ENCODE measurements at regions of chr4 and their contacts with region 1.

Region 1: DNA sequence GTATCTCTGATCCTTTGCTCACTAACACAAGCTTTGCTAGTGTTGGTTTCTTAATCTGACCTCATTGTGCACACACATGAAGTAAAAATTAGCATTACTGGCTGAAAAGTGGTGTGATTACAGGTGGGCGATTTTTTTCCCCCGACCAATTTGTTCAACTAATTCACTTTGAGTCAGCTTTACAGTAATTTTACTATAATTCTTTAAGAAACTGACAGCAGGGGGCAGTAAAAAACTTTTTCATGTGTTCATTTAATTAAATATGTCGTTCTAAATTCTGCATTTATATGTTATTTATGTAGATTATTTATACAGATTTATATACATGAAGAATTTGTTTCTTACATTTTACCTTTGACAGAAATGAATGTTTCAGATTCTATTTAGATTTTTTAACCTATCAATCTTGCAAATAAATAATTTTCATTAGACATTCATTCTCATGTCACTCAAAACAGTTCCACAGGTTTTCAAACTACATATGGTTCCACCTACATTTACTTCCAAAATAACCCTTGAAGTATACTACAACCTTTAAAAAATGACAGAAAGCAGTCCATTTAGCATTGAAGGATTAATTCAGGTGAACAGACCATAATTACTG is 17.5 kb downstream of the PALLD start:
- DNase-seq: peak in 2 of 9 experiments; percentile 40 to 58
- ATAC-seq: no peak
- H3K4me3 ChIP-seq: no peak overlapping the region
- H3K4me3 Mint-ChIP-seq: no peak overlapping the region
- H3K27ac ChIP-seq: no peak overlapping the region
- H3K27ac Mint-ChIP-seq: no peak overlapping the region
- H3K4me1 ChIP-seq: peaks cover 27% of the 10 kb centered on the region
- H3K4me1 Mint-ChIP-seq: peaks cover 37% of the 10 kb centered on the region
- H3K27me3 ChIP-seq: no peaks in the 10 kb centered on the region
- H3K27me3 Mint-ChIP-seq: no peaks in the 10 kb centered on the region
- CTCF ChIP-seq: peak; percentile 61

Region 2: DNA sequence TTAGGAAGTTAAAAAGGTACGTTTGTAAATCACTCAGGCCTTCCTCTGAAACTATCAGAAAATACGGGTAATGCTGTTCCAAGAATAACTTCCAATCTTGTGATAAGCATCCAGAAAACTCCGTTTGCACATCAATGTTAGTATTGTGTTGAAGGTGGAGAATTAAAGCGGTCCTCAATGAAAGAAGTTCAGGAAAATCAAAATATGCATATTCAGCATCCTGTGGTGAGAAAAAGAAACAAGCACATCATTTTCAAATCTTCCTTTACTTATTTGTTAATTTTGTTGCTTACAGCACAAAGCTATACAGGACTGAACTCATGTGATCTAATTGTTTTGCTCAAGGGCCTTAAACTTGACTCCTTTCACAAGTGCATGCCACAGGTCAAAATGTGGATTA is 52.5 kb before region 1 on chr4:
- CTCF ChIA-PET with region 1: no interaction called
- POLR2A ChIA-PET with region 1: no interaction called
- intact Hi-C with region 1: no loop called
- DNase-seq: no peak
- ATAC-seq: no peak
- H3K4me3 ChIP-seq: no peak overlapping the region
- H3K4me3 Mint-ChIP-seq: no peak overlapping the region
- H3K27ac ChIP-seq: no peak overlapping the region
- H3K27ac Mint-ChIP-seq: no peak overlapping the region
- H3K4me1 ChIP-seq: no peaks in the 10 kb centered on the region
- H3K4me1 Mint-ChIP-seq: peaks cover 3% of the 10 kb centered on the region
- H3K27me3 ChIP-seq: no peaks in the 10 kb centered on the region
- H3K27me3 Mint-ChIP-seq: no peaks in the 10 kb centered on the region
- CTCF ChIP-seq: no peak

Region 3: DNA sequence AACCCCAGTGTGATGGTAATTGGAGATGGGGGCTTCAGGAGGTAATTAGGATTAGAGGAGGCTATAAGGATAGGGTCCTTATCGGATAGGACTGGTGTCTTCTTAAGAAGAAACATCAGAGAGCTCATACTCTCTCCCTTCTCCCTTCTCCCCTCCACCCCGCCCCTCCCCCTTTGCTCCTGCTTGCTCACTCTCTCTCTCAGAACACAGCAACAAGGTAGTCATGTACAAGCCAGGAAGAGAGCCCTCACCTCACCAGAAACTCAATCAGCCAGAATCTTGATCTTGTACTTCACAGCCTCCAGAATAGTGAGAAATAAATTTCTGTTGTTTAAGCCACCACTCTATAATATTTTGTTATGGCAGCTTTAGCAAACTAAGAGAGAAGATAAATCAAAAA is 38.6 kb before region 1 on chr4:
- CTCF ChIA-PET with region 1: interaction called, 3 read pairs
- POLR2A ChIA-PET with region 1: interaction called, 6 read pairs
- intact Hi-C with region 1: loop called (anchors 1 to 2 kb)
- DNase-seq: peak in 3 of 9 experiments; percentile 7 to 24 (median 24)
- ATAC-seq: no peak
- H3K4me3 ChIP-seq: no peak overlapping the region
- H3K4me3 Mint-ChIP-seq: no peak overlapping the region
- H3K27ac ChIP-seq: no peak overlapping the region
- H3K27ac Mint-ChIP-seq: no peak overlapping the region
- H3K4me1 ChIP-seq: peaks cover 21% of the 10 kb centered on the region
- H3K4me1 Mint-ChIP-seq: peaks cover 66% of the 10 kb centered on the region
- H3K27me3 ChIP-seq: no peaks in the 10 kb centered on the region
- H3K27me3 Mint-ChIP-seq: no peaks in the 10 kb centered on the region
- CTCF ChIP-seq: no peak

Region 4: DNA sequence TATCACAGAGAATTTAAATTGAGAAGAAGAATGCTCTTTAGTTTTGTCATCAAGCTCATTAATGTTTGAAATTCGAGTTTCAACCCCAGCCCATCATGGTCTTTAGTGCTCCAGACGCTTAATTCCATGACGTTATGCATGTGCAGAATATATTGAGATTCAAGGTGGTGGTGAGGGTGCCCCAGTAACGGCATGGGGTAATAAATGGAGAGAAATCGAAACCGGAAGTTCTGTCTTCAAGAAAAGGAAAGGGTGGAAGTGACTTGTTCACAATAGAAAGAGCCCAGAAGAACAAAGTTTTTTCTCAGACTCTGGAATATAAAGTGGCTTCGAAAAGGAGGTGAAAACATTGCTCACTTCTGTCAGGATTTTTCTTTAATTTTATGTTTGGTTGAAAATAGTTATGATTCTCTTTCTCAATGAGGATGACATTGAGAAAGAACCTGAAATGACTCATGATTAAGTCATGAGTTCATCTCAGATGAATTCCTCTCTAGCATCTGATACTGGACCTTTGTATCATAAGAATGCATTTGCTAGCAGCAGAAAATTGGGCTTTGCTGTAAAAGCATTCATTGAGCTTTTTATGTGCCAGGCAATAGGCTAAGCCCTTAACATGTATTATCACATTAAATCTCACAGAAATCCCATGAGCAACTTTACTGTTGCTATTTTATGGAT is 33.3 kb before region 1 on chr4:
- CTCF ChIA-PET with region 1: interaction called, 3 read pairs
- POLR2A ChIA-PET with region 1: interaction called, 6 read pairs
- intact Hi-C with region 1: loop called (anchors 1 to 2 kb)
- DNase-seq: peak in 8 of 9 experiments; percentile 16 to 89 (median 56)
- ATAC-seq: peak; percentile 67
- H3K4me3 ChIP-seq: peak overlapping the region; percentile 56 to 93
- H3K4me3 Mint-ChIP-seq: peak overlapping the region; percentile 99
- H3K27ac ChIP-seq: peak overlapping the region; percentile 82 to 96
- H3K27ac Mint-ChIP-seq: peak overlapping the region; percentile 97
- H3K4me1 ChIP-seq: peaks cover 42% of the 10 kb centered on the region
- H3K4me1 Mint-ChIP-seq: peaks cover 66% of the 10 kb centered on the region
- H3K27me3 ChIP-seq: no peaks in the 10 kb centered on the region
- H3K27me3 Mint-ChIP-seq: no peaks in the 10 kb centered on the region
- CTCF ChIP-seq: no peak

Region 5: DNA sequence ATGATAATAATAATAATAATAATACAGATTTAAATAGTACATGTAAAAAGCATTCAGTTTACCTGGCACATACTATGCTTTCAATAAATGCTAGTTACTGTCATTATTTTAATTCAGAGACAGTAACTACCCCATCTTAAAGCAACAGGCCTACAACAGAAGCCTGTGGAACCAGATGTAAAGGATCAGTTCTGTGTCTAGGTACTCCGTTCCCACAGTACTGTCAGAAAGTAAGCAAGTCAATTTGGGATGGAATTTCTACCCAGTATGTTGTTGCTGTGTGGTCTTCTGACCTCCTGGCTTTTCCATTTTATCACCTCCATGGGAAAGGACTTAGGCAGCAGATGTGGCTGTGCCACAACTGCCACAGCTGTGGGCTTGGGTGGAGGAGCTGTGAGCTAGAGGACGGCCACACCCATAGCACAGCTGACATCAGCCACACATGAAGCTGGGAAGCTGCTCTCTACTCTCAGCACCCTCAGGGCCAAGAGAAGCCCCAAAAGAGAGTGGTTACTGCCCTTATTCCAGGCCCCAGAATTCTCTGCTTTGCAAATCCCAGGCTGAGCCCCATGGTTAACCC is 392.9 kb after region 1 on chr4:
- CTCF ChIA-PET with region 1: no interaction called
- POLR2A ChIA-PET with region 1: no interaction called
- intact Hi-C with region 1: loop called (anchors 10 kb)
- DNase-seq: peak in 2 of 9 experiments; percentile 36 to 55
- ATAC-seq: no peak
- H3K4me3 ChIP-seq: no peak overlapping the region
- H3K4me3 Mint-ChIP-seq: no peak overlapping the region
- H3K27ac ChIP-seq: peak overlapping the region in 1 of 2 experiments; percentile 70
- H3K27ac Mint-ChIP-seq: no peak overlapping the region
- H3K4me1 ChIP-seq: no peaks in the 10 kb centered on the region
- H3K4me1 Mint-ChIP-seq: no peaks in the 10 kb centered on the region
- H3K27me3 ChIP-seq: no peaks in the 10 kb centered on the region
- H3K27me3 Mint-ChIP-seq: no peaks in the 10 kb centered on the region
- CTCF ChIP-seq: no peak

Region 6: DNA sequence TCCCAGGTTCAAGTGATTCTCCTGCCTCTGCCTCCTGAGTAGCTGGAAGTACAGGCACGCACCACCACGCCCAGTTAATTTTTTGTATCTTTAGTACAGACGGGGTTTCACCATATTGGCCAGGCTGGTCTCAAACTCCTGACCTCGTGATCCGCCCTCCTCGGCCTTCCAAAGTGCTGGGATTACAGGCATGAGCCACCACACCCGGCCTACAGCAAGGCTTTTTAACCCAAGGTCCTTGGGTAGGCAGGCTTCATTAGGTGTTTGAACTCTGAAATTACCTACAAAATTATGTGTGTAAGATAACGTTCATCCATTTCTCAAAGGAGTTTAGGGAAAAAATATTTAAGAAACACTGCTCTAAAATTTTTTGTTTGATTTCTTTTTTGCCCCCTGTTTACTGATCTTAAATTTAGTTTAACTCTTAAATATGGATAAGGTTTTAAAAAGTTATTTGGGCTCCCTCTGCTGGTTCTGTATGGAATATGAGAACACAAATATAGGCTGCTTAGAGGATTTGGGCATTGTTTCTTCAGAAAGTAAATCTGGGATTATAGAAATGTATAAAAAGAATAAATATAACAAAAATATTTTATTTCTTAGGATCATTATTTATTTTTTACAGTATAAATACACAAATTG is 402.9 kb after region 1 on chr4:
- CTCF ChIA-PET with region 1: no interaction called
- POLR2A ChIA-PET with region 1: no interaction called
- intact Hi-C with region 1: loop called in 1 of 2 experiments (anchors 10 kb)
- DNase-seq: peak in 2 of 9 experiments; percentile 23 to 35
- ATAC-seq: no peak
- H3K4me3 ChIP-seq: no peak overlapping the region
- H3K4me3 Mint-ChIP-seq: no peak overlapping the region
- H3K27ac ChIP-seq: no peak overlapping the region
- H3K27ac Mint-ChIP-seq: no peak overlapping the region
- H3K4me1 ChIP-seq: no peaks in the 10 kb centered on the region
- H3K4me1 Mint-ChIP-seq: no peaks in the 10 kb centered on the region
- H3K27me3 ChIP-seq: no peaks in the 10 kb centered on the region
- H3K27me3 Mint-ChIP-seq: no peaks in the 10 kb centered on the region
- CTCF ChIP-seq: peak; percentile 25

Region 7: DNA sequence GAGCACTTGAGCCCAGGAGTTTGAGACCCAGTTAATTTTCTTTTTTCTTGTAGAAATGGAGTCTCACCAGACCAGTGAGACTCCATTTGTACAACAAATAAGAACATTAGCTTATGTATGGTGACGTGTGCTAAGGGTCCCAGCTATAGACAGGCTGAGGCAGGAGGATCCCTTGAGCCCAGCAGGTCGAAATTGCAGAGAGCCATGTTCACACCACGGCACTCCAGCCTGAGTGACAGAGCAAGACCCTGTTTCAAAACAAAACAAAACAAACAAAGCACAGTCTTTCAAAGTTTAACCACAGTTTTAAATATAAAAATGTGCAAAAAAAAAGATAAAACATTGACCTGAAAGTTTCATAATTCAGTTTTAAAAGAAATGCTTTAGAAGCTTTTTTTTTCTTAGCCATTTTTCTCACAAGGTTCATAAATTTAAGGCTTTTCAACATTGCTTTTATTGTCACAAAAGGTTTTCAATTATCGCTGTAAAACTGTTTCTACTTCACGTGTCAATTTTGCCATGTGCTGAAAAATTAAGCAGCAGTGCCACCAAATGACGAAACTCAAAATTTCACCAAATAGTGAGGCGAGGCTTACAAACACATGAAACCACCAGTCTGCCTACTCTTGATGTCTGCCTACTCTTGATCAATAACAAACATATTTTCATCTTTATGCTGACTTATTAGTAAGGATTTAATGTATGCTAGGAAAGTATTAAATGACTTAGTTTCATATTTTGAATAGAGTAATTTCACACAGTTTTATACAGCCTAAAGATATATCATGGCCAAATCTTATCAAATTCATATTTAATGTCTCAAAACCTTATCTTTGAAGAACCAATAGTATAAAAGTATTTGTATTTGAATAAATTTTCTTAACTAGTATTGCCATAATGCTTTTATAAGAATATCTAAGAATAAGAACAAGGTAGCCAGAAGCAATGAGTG is 971.7 kb after region 1 on chr4:
- CTCF ChIA-PET with region 1: no interaction called
- POLR2A ChIA-PET with region 1: no interaction called
- intact Hi-C with region 1: loop called (anchors 5 to 10 kb)
- DNase-seq: peak in 5 of 9 experiments; percentile 2 to 57 (median 18)
- ATAC-seq: no peak
- H3K4me3 ChIP-seq: no peak overlapping the region
- H3K4me3 Mint-ChIP-seq: no peak overlapping the region
- H3K27ac ChIP-seq: no peak overlapping the region
- H3K27ac Mint-ChIP-seq: no peak overlapping the region
- H3K4me1 ChIP-seq: no peaks in the 10 kb centered on the region
- H3K4me1 Mint-ChIP-seq: peaks cover 3% of the 10 kb centered on the region
- H3K27me3 ChIP-seq: no peaks in the 10 kb centered on the region
- H3K27me3 Mint-ChIP-seq: no peaks in the 10 kb centered on the region
- CTCF ChIP-seq: peak; percentile 60